ENCODE measurements at regions of chr15 and their contacts with region 1.

Region 1: GRCh38 chr15:74373731-74374647 is 6.5 kb upstream of the CYP11A1 start:
- DNase-seq: peak; percentile 87 to 95 (median 94)
- H3K4me3 ChIP-seq: peak overlapping the region; percentile 27 to 83 (median 66)
- H3K27ac ChIP-seq: no peak overlapping the region
- H3K4me1 ChIP-seq: peaks cover 2 to 31% (median 28%) of the 10 kb centered on the region in 4 experiments
- H3K27me3 ChIP-seq: peaks cover 0 to 3% (median 0%) of the 10 kb centered on the region in 5 experiments

Region 2: GRCh38 chr15:74350295-74351290 is 23.4 kb before region 1 on chr15:
- CTCF ChIA-PET with region 1: no interaction called
- POLR2A ChIA-PET with region 1: no interaction called
- DNase-seq: no peak
- H3K4me3 ChIP-seq: no peak overlapping the region
- H3K27ac ChIP-seq: no peak overlapping the region
- H3K4me1 ChIP-seq: no peaks in the 10 kb centered on the region
- H3K27me3 ChIP-seq: peaks cover 0 to 2% (median 0%) of the 10 kb centered on the region in 5 experiments

Region 3: DNA sequence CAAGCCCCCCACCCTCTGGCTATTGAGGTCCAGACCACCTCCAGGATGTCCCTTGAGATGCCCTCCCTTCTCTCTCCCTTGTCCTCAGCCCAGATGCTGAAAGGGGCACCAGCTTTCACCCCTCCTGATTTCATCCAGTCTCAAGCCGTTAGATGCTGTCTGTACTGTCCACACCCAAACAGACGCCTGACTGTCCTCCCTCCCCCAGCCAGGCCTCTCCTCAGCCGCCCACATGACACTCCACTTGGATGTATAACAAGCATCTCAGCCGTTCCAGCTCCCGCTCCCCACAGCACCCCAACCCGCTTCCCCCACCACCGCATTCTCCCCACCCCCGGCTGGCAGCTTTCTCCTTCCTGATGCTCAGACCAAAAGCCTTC is 18.5 kb after region 1 on chr15:
- CTCF ChIA-PET with region 1: interaction called, 16 read pairs
- POLR2A ChIA-PET with region 1: interaction called, 4 read pairs
- DNase-seq: peak in 1 of 3 donors; percentile 17
- H3K4me3 ChIP-seq: peak overlapping the region in 1 of 7 experiments; percentile 6
- H3K27ac ChIP-seq: peak overlapping the region in 1 of 2 experiments; percentile 50
- H3K4me1 ChIP-seq: peaks cover 0 to 84% (median 79%) of the 10 kb centered on the region in 4 experiments
- H3K27me3 ChIP-seq: no peaks in the 10 kb centered on the region

Region 4: DNA sequence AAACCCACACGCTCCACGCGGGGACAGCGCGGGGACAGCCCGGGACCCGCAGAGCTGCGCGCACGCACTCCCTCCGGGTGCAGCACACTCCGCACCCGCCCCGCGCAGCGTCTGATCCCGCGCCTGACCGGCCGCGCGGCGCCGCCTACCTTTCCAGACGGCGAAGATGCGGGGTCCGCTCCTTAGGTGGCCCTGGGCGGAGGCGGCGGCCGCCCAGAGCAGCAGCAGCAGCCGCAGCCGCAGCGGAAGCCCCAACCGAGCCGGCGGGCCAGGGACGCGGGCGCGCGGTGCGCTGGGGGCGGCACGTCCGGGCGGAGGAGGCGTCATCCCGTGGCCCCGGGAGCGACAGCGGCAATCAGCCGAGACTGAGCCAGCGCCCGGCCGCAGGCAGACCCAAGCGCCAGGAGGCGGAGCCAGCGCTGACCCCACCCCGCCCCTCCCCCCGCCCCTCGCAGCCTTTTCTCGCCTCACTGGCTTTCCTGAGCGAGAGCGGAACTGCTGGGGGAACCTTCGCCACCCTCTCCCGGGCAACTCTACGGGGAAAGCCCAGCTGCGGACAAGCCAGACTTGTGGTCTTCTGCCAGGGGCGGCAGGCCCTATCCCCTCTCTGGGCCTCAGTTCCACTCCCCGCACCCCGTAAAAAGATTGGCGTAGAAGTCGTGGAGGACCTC is 59.7 kb after region 1 on chr15 and contains the start of gene SEMA7A:
- CTCF ChIA-PET with region 1: interaction called, 671 read pairs
- POLR2A ChIA-PET with region 1: interaction called, 3 read pairs
- DNase-seq: peak; percentile 74 to 84 (median 82)
- H3K4me3 ChIP-seq: peak within 1 kb of the TSS; percentile 68 to 90 (median 87)
- H3K27ac ChIP-seq: peak within 1 kb of the TSS; percentile 36 to 74
- H3K4me1 ChIP-seq: peaks cover 0 to 65% (median 54%) of the 10 kb centered on the region in 4 experiments
- H3K27me3 ChIP-seq: peaks cover 0 to 7% (median 0%) of the 10 kb centered on the region in 5 experiments

Region 5: DNA sequence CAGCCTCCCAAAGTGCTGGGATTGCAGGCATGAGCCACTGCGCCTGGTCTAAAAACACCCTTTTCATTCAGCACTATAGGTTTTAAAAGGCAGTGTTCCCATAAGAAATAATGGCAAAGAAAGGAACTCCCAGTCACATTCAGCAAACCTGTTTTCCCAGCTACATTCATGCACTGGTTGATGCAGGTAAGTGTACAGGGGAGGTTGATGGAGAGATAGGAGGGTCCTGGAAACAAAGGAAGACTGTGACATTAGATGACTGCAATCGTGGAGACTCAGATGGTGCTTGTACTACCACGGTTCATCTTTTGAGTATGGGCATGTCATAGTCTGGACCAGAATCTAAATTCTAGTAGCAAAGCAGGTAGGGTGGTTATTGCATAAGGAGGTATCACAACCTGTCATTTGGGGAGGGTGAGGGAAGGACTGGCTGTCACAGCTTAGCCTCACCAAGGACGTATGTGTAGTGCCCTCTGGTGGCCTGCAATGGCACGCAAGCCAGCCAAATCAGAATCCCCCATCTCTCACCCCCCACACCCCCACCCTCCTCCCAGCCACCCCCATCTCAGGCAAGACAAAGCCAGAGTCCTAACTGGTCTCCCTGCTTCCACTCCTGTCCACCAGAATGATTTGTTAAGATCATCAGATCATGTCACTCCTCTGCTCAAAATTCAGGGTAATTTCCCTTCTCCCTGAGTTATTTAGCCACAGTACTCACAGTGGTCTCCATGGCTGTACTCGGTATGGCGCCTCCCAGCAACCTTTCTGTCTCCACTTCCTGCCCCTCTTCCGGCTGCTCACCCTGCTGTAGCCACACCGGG is 115.7 kb after region 1 on chr15:
- CTCF ChIA-PET with region 1: interaction called, 16 read pairs
- POLR2A ChIA-PET with region 1: no interaction called
- DNase-seq: peak; percentile 77 to 89 (median 88)
- H3K4me3 ChIP-seq: peak overlapping the region in 6 of 7 experiments; percentile 27 to 72 (median 50)
- H3K27ac ChIP-seq: peak overlapping the region in 1 of 2 experiments; percentile 68
- H3K4me1 ChIP-seq: peaks cover 0 to 20% (median 12%) of the 10 kb centered on the region in 4 experiments
- H3K27me3 ChIP-seq: no peaks in the 10 kb centered on the region

Measured in common myeloid progenitor, CD34-positive (primary cell).